ENCODE measurements at regions of chr2 and their contacts with region 1.

Region 1: GRCh38 chr2:196076778-196077568 is 8.3 kb upstream of the DNAH7 start:
- DNase-seq: no peak
- ATAC-seq: no peak
- H3K4me3 ChIP-seq: no peak overlapping the region
- H3K27ac ChIP-seq: no peak overlapping the region
- H3K4me1 ChIP-seq: peaks cover 3% of the 10 kb centered on the region
- H3K27me3 ChIP-seq: no peaks in the 10 kb centered on the region

Region 2: DNA sequence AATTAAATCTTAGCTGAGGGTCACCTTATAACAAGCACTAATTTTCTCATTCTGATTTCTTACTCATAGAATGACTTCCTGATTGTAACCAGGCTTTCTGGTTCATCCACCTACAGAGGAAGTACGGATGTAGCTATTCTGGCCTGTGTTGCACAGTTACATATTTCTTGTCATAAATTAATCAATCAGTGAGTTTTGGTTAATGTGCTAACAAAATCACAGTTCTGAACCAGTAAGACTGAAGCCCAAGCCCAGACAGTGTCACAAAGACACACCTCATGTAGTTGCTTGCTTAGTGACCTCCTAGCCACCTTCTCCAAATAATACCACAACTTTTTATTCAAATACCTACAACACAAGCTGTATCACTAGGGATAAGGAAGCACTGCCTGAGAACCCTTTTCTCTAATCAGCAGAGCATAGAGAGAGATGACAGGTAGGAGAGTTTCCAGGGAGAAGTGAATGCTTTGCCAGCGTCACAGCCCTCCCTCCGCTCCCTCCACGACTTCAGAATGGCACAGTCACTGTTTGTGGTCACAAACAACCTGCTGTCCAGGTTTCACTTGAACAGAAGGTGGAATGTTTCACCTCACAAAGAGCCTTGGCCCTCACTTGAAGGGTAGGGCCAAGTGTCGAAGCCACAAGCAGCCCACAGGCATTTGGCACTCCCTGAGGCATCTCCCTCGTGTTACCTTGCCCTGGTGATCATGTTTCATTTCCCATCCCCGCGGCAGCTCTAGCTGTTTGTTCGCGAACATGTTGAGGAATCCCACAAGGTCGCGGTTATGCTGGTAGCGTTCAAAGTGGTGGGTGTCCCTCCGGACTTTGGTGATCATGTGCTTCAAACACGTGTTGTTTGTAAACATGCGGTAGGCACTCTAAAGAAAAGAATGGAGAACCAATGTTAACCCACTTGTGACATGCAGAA is 215.2 kb after region 1 on chr2:
- intact Hi-C with region 1: loop called in 1 of 4 experiments (anchors 10 kb)
- DNase-seq: no peak
- ATAC-seq: peak in 1 of 2 donors; percentile 7
- H3K4me3 ChIP-seq: no peak overlapping the region
- H3K27ac ChIP-seq: no peak overlapping the region
- H3K4me1 ChIP-seq: no peaks in the 10 kb centered on the region
- H3K27me3 ChIP-seq: no peaks in the 10 kb centered on the region

Region 3: DNA sequence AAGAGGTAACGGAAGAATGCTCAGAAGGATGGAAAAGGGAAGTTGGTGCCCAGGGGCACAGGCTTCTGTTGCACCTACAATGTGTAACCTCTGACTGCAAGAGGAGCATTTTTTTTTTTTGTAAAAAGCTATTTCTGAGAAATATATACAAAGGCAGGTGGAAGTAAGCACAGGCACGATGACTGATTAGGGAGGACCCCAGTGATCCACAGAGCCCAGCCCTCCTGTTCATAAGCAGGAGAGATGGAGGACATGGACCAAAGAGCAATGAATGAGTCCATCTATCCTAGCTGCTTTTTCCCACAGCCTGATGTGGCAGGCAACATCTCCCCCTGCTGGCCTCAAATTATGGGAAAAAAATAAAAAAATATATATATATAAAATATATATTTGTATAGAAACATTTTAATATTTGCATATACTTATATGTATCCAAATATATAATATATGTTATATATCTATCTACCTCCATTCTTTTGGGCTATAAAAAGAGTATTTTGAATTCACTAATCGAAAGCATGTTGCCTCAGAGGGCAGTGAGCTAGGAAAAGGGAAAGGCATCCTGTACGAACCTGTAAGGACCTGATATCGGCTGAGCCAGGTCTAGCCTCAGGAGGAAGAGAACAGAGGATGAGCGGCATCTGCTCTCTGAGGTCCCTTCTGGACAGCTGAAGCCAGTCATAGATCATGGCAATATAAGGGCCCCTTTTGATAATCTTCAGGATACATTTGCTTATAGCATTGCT is 260.4 kb after region 1 on chr2:
- intact Hi-C with region 1: loop called in 2 of 4 experiments (anchors 10 kb)
- DNase-seq: no peak
- ATAC-seq: no peak
- H3K4me3 ChIP-seq: no peak overlapping the region
- H3K27ac ChIP-seq: no peak overlapping the region
- H3K4me1 ChIP-seq: peaks cover 2% of the 10 kb centered on the region
- H3K27me3 ChIP-seq: no peaks in the 10 kb centered on the region

Region 4: GRCh38 chr2:196459539-196459938 is 382.6 kb after region 1 on chr2:
- intact Hi-C with region 1: loop called in 1 of 4 experiments (anchors 5 kb)
- DNase-seq: no peak
- ATAC-seq: no peak
- H3K4me3 ChIP-seq: no peak overlapping the region
- H3K27ac ChIP-seq: no peak overlapping the region
- H3K4me1 ChIP-seq: no peaks in the 10 kb centered on the region
- H3K27me3 ChIP-seq: no peaks in the 10 kb centered on the region